Ascending aorta (tissue), 2 donors: ENCODE measurements at regions of chr7 and their contacts with region 1.

Region 1: DNA sequence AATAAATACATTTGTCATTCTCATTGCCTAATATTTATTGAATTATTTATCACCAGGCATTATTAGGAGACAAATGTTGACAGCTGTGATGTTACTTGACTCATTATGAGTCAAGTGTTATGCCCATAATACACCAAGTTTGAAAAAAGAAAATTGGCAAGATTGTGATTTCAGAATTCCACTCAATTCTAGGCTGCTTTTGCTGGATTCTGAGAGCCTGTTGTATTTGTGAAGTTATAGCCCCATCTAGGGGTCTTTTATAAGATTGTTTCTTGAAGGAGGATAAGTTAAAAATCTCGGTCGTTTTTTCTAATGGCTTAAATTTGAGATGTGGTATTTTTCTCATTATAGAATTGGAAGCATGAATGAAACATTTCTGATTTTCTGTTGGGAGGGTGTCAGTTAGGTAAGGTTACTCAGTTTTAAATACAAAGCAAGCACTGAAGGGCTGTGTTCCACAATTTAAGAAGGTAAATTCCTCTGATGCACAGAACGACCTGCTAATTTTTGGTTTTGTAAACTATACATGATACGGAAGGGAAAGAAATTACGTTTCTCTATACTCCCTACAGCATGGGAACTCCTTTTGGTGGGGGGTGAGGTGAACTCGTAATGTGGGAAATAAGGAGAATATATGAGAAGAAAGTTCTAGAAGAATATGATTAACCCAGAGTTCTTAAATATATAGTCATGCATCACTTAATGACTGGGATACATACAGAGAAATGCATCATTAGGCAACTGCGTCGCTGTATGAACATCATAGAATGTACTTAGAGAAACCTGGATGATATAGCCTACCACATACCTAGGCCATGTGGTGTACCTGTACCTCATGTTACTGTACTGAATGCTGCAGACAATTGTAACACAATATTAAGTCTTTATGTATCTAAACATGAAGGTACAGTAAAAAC is 2.6 kb downstream of the STK31 start:
- DNase-seq: no peak
- H3K4me3 ChIP-seq: no peak overlapping the region
- H3K27ac ChIP-seq: no peak overlapping the region
- H3K4me1 ChIP-seq: no peaks in the 10 kb centered on the region
- H3K27me3 ChIP-seq: no peaks in the 10 kb centered on the region
- CTCF ChIP-seq: peak; percentile 57 to 73 (median 59)

Region 2: GRCh38 chr7:23013715-23014649 is 698.6 kb before region 1 on chr7 and contains the start of gene HYCC1:
- intact Hi-C with region 1: no loop called
- DNase-seq: peak; percentile 97 to 100
- H3K4me3 ChIP-seq: peak within 1 kb of the TSS; percentile 76 to 98
- H3K27ac ChIP-seq: peak within 1 kb of the TSS; percentile 78 to 88
- H3K4me1 ChIP-seq: peaks cover 4 to 30% of the 10 kb centered on the region in 2 donors
- H3K27me3 ChIP-seq: no peaks in the 10 kb centered on the region
- CTCF ChIP-seq: peak; percentile 64 to 69 (median 69)
- total RNA-seq, gene HYCC1: 10.9 TPM

Region 3: DNA sequence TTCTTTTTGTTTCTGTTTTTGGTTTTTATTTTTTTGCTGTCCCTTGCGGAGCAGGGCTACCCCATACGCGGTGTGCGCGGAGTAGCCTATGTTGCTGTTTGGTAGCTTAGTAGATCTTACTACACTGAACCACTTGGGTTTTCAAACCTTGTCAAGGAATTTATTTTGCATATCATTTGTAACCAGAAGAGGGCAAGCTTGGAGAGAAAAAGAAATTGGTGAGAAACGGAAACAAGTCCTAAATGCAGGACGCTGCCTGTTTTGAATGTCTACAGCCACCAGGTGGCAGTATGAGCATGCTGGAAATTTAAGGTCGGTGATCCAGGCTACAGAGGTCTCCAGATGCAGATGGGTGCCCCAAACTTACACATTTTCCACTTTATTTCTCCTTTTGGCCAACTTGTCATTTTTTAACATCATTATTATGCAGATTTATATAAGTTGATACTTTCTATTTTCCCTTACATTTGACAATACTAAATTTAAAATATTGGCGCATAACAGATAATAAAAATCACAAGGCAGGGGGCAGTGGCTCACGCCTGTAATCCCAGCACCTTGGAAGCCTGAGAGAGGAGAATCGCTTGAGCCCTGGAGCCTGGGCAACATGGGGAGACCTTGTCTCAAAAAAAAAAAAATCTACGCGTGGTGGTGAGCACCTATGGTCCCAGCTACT is 165.6 kb before region 1 on chr7:
- intact Hi-C with region 1: loop called (anchors 2 kb)
- DNase-seq: peak; percentile 41 to 91
- H3K4me3 ChIP-seq: no peak overlapping the region
- H3K27ac ChIP-seq: no peak overlapping the region
- H3K4me1 ChIP-seq: no peaks in the 10 kb centered on the region
- H3K27me3 ChIP-seq: no peaks in the 10 kb centered on the region
- CTCF ChIP-seq: peak; percentile 79 to 92 (median 85)

Region 4: GRCh38 chr7:23570592-23571200 is 141.9 kb before region 1 on chr7:
- intact Hi-C with region 1: loop called (anchors 1 kb)
- DNase-seq: peak in 1 of 2 donors; percentile 80
- H3K4me3 ChIP-seq: no peak overlapping the region
- H3K27ac ChIP-seq: no peak overlapping the region
- H3K4me1 ChIP-seq: no peaks in the 10 kb centered on the region
- H3K27me3 ChIP-seq: no peaks in the 10 kb centered on the region
- CTCF ChIP-seq: peak; percentile 66 to 89 (median 70)